ENCODE measurements at regions of chr3 and their contacts with region 1.

Region 1: DNA sequence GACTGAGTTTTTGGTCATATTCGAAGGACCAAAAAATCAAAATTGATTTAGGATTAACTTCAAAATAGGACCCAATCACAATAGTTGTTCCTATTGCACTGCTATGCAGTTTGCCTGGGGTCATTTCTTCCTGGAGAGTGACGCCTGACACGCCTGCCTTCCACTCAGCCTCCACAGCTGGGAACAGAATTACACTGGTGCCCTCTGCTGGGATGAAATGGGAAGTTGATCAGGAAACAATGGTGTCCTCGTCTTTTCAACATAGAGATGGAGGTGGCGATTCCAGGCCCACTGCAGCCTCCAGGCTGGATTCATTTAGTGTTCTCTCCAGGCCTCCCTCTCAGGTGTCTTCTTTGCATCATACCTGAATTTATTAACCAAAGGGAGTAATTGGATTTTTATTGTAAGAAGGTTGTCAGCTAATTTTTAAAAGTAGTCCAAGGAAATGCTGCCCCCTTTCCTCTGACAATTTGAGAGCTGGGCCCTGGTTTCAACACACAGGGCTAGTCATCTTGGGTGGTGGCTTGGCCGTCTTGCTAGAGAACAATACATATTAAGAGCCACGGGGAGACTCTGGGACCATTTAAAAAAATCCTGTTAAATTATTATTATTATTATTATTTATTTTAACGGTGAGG is 69.7 kb downstream of the GAP43 start:
- DNase-seq: peak; percentile 65
- H3K4me3 ChIP-seq: no peak overlapping the region
- H3K27ac ChIP-seq: peak overlapping the region; percentile 25
- H3K4me1 ChIP-seq: no peaks in the 10 kb centered on the region
- H3K27me3 ChIP-seq: no peaks in the 10 kb centered on the region
- CTCF ChIP-seq: peak; percentile 71 to 88

Region 2: GRCh38 chr3:115040673-115041286 is 652.2 kb before region 1 on chr3:
- CTCF ChIA-PET with region 1: no interaction called
- dilution Hi-C with region 1: no loop called
- in situ Hi-C with region 1: no loop called
- intact Hi-C with region 1: loop called (anchors 5 kb)
- DNase-seq: peak; percentile 25
- H3K4me3 ChIP-seq: no peak overlapping the region
- H3K27ac ChIP-seq: no peak overlapping the region
- H3K4me1 ChIP-seq: no peaks in the 10 kb centered on the region
- H3K27me3 ChIP-seq: no peaks in the 10 kb centered on the region
- CTCF ChIP-seq: peak; percentile 72 to 78

Region 3: GRCh38 chr3:115147329-115148141 is 545.5 kb before region 1 on chr3:
- CTCF ChIA-PET with region 1: no interaction called
- dilution Hi-C with region 1: no loop called
- in situ Hi-C with region 1: no loop called
- intact Hi-C with region 1: loop called (anchors 5 kb)
- DNase-seq: peak; percentile 100
- H3K4me3 ChIP-seq: peak overlapping the region; percentile 67 to 87 (median 74)
- H3K27ac ChIP-seq: peak overlapping the region; percentile 74
- H3K4me1 ChIP-seq: peaks cover 13% of the 10 kb centered on the region
- H3K27me3 ChIP-seq: no peaks in the 10 kb centered on the region
- CTCF ChIP-seq: no peak

Region 4: GRCh38 chr3:115436767-115437301 is 256.2 kb before region 1 on chr3:
- CTCF ChIA-PET with region 1: no interaction called
- dilution Hi-C with region 1: no loop called
- in situ Hi-C with region 1: loop called in 1 of 2 experiments (anchors 25 kb)
- intact Hi-C with region 1: loop called (anchors 1 kb)
- DNase-seq: peak; percentile 97
- H3K4me3 ChIP-seq: no peak overlapping the region
- H3K27ac ChIP-seq: peak overlapping the region; percentile 55
- H3K4me1 ChIP-seq: peaks cover 18% of the 10 kb centered on the region
- H3K27me3 ChIP-seq: no peaks in the 10 kb centered on the region
- CTCF ChIP-seq: peak; percentile 50 to 67

Region 5: DNA sequence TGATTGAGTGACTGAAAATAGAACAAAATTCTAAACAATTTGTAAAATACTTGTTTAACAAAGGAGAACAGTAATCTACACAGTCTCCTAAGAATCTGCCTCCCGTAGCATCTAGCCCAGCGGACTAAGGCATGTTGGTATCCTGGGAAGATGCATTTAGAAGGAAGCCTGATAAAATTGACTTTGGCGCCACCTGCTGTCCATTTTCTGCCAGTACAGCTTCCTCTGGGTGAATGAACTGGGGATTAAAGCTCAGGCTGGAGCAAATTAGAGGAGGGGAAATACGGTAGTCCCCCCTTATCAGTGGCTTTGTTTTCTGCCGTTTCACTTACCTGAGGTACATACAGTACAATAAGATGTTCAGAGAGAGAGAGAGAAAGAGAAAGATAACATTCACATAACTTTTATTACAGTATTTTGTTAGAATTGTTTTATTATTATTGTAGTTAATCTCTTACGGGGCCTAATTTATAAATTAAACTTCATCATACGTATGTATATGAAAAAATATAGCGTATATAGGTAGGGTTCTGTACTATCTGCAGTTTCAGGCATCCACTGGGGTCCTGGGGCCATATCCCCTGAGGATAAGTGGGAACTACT is 121.9 kb after region 1 on chr3:
- CTCF ChIA-PET with region 1: no interaction called
- dilution Hi-C with region 1: no loop called
- in situ Hi-C with region 1: loop called (anchors 10 to 25 kb)
- intact Hi-C with region 1: loop called (anchors 1 kb)
- DNase-seq: peak; percentile 60
- H3K4me3 ChIP-seq: no peak overlapping the region
- H3K27ac ChIP-seq: peak overlapping the region; percentile 15
- H3K4me1 ChIP-seq: peaks cover 3% of the 10 kb centered on the region
- H3K27me3 ChIP-seq: no peaks in the 10 kb centered on the region
- CTCF ChIP-seq: peak; percentile 79 to 90